Right ventricle myocardium superior (tissue), 1 donor: ENCODE measurements at regions of chr11 and their contacts with region 1.

Region 1: GRCh38 chr11:76444384-76445123 is at the start of gene EMSY:
- DNase-seq: peak; percentile 97
- ATAC-seq: peak; percentile 96
- total RNA-seq, gene EMSY: 18.3 TPM

Region 2: DNA sequence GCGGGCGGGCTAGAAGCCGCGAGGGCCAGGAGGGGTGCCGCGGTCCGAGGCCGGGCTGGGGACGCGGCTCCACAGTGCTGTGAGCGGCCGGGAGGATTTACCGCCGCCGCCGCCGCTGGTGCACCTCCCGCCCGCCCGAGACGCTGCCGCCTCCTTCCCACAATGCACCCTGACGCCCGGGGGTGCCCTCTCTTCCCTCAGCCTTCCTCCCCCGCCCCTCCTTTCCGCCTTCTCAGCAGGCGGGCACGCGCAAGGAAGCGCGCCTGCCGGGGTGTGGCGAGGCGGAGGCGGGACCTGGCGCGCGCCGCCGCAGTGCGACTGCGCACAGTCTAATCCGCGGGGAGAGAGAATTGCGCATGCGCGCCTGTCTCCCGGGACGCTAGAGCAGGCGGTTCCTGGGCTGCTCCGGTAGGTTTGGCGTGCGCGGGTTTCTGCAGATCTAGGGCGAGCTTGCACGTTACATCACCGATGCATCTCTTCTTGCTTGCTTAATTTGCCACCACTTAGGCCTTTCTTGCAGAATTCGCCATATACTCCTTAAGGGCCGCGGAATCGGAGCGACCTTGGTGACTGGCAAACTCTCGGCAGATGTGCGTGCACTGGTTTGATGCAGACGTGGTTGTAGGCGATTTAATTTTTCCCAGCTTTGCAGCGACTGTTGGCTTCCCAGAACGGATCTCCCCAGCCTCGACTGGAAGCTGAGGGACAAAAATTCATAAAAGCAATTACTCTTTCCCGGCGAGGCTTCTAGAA is 63.4 kb before region 1 on chr11 and contains the starts of genes GVQW3 and THAP12:
- intact Hi-C with region 1: loop called (anchors 10 kb)
- DNase-seq: peak; percentile 98
- ATAC-seq: peak; percentile 98
- total RNA-seq, gene GVQW3: 1.5 TPM
- total RNA-seq, gene THAP12: 18.3 TPM